ENCODE measurements at regions of chr20 and their contacts with region 1.

Region 1: GRCh38 chr20:34768096-34768495 is 57.4 kb downstream of the NCOA6 start:
- DNase-seq: no peak
- H3K4me3 ChIP-seq: no peak overlapping the region
- H3K27ac ChIP-seq: no peak overlapping the region
- H3K4me1 ChIP-seq: no peaks in the 10 kb centered on the region
- H3K27me3 ChIP-seq: no peaks in the 10 kb centered on the region
- CTCF ChIP-seq: no peak

Region 2: DNA sequence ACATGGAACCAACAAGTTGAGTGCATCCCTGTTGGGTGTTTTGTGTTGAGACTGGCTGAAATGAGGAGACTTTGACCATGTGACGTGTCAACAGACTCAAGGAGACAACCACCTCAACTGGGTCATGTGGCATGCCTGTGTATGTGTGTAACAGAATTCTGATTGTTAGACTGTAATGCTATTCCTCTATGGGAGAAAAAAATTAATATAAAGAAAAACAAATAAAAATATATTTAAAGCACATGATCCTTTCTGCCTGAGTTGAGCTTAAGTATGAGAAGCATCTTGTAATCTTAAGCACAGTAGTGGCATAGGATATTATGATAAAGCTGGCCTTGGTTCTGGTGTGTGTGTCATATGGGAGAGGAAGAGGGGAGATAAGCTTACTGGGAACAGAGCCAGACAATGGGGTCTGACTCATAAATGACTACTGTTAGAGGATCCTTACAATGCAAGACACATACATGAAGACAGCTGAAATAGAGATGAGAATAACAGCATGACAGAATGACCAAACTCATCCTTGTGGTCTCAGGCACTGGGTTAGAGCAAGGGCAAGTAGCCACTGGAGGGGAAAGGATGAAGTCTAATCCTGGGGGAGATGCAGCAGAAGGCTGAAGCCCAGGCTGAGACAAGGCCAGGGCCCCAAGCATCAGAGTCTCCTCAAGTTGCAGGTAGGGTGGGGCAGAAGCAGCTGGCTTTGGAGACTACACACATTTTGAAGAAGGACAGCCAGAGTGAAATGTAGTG is 54.7 kb before region 1 on chr20:
- CTCF ChIA-PET with region 1: no interaction called
- dilution Hi-C with region 1: no loop called
- in situ Hi-C with region 1: no loop called
- intact Hi-C with region 1: no loop called
- DNase-seq: peak; percentile 94
- H3K4me3 ChIP-seq: no peak overlapping the region
- H3K27ac ChIP-seq: no peak overlapping the region
- H3K4me1 ChIP-seq: peaks cover 28% of the 10 kb centered on the region
- H3K27me3 ChIP-seq: no peaks in the 10 kb centered on the region
- CTCF ChIP-seq: no peak

Region 3: DNA sequence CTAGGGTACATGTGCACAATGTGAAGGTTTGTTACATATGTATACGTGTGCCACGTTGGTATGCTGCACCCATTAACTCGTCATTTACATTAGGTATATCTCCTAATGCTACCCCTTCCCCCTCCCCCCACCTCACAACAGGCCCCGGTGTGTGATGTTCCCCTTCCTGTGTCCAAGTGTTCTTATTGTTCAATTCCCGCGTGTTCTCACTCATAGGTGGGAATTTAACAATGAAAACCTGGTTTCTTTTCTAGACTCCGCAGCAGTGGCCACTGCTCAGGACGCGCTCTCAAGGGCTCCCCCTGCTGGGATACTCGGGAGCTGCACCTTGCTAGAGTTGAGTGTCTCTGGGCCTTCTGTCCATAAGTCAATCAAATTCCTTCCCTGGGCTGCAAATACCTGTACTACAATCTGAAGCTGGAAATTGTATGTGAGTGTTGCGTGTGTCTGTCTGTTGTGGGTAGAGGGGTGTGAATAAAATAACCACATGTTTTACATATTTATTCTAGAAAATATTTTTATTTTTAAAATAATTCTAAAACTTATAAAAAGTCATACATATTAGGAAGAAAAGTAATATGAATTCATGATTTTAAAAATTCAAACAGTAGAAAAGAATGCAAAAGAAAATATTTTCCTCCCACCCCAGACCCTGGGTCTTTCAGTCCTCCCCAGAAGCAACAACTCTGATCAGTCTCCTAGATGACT is 679.1 kb after region 1 on chr20:
- CTCF ChIA-PET with region 1: interaction called, 10 read pairs
- dilution Hi-C with region 1: no loop called
- in situ Hi-C with region 1: no loop called
- intact Hi-C with region 1: no loop called
- DNase-seq: peak; percentile 71
- H3K4me3 ChIP-seq: no peak overlapping the region
- H3K27ac ChIP-seq: no peak overlapping the region
- H3K4me1 ChIP-seq: peaks cover 26% of the 10 kb centered on the region
- H3K27me3 ChIP-seq: no peaks in the 10 kb centered on the region
- CTCF ChIP-seq: peak; percentile 89 to 97

Measured in mammary epithelial cell (primary cell).